ENCODE measurements at regions of chr10 and their contacts with region 1.

Region 1: DNA sequence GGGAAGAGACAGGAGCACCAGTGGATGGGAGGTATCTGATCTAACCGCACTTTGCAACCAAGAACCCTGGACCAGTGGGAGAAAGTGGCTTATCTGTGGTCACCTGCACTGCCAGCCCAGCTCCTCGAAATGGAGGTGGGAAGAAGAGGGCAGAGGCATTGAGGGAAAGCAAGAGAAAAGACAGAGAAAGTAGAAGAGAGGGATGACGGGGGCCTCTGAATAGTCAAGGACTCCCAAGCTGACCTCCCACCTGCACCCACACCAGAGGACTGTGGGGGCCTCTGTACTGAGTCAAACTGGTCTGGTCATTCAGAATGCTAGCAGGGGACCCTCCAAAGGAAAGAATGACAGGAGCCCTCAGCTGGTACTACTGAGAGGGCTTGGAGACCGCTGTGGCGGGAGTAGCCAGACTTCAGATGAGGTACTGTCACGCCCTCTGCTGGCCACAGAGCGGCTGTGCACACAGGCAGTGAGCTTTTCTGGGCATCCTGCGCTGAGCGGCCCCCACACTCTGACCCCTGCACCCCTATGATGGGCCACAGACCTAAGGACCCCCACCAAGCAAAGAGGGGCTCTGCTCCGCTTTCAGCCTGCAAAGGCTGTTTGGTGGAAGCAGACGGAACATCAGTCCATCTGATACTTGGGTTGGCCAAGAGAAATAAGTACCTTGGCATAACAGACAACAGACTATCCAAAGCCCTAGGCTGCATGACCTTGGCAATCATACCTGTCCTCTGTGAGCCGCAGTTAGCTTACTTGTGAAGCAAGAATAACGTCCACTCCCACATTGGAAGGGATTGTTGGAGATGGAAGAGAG is 112.9 kb downstream of the COL13A1 start:
- DNase-seq: peak; percentile 79
- H3K4me3 Mint-ChIP-seq: no peak overlapping the region
- H3K27ac Mint-ChIP-seq: no peak overlapping the region
- H3K4me1 Mint-ChIP-seq: no peaks in the 10 kb centered on the region
- H3K27me3 Mint-ChIP-seq: peaks cover 5% of the 10 kb centered on the region

Region 2: DNA sequence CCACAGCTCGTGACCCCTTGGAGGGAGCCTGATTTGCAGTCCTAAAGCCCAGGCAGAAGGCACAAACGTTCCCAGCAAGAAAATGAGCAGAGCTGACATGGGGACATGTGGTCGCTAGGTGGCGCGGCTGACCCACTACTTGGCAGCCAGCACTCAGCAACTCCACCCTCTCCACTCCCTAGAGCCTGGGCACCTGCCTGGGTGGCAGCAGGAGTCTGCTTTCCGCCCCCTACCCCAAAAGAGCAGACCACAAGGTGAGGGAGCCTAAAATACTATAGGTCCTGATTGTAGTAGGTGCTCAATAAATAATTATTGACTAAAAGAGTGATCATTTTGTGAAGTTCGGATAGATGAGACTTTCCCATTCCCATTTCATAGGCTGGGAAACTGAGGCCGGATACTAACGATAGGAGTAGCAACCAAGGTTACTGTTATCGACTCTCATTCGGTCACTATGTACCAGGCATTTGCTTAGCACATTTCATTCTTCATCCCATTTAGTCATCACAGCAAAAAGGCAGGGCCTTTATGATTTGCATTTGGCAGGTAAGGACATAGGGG is 398.8 kb before region 1 on chr10:
- CTCF ChIA-PET with region 1: interaction called, 9 read pairs
- intact Hi-C with region 1: loop called (anchors 5 kb)
- DNase-seq: peak; percentile 87
- H3K4me3 Mint-ChIP-seq: no peak overlapping the region
- H3K27ac Mint-ChIP-seq: no peak overlapping the region
- H3K4me1 Mint-ChIP-seq: no peaks in the 10 kb centered on the region
- H3K27me3 Mint-ChIP-seq: no peaks in the 10 kb centered on the region

Region 3: DNA sequence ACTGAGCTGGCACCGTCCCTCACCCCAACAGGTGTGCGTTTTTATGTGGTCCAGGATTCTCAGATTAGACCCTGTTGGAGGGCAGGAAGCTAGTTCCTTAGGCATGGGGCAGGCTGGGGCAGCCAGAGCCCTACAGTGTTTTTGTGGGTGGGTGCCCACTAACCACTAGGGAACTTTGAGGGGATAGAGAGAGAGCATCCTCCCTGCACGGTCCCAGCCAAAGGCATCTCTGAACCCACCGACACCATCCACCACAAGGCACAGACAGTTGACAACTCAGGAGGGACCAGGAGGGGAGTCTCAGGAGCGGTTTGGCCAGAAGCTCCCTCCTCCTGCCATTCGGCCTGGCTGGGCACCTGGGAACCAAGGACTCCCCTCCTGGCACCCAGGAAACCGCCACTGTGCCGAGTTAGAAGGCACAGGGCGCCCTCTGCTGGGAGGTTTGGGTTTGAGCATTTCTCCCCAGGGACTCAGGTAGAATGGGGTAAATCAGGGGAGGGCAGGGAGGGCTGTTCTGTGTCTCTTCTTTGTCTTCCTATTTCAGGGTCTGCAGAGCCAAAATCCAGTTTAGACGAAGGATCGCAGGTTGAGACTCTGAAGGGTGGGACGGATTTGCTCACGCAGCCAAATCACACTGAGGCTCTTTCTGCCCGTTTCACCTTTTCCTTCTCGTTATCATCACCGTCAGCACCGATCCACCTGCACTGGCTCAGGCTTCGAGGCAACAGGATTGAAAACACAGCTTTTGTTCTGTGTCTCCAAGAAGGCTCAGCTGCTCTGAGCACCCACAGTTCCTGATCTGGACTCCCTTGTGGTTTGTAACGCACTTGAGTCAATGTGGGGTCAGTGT is 197.7 kb before region 1 on chr10:
- CTCF ChIA-PET with region 1: interaction called, 10 read pairs
- intact Hi-C with region 1: no loop called
- DNase-seq: peak; percentile 78
- H3K4me3 Mint-ChIP-seq: no peak overlapping the region
- H3K27ac Mint-ChIP-seq: no peak overlapping the region
- H3K4me1 Mint-ChIP-seq: no peaks in the 10 kb centered on the region
- H3K27me3 Mint-ChIP-seq: no peaks in the 10 kb centered on the region

Region 4: DNA sequence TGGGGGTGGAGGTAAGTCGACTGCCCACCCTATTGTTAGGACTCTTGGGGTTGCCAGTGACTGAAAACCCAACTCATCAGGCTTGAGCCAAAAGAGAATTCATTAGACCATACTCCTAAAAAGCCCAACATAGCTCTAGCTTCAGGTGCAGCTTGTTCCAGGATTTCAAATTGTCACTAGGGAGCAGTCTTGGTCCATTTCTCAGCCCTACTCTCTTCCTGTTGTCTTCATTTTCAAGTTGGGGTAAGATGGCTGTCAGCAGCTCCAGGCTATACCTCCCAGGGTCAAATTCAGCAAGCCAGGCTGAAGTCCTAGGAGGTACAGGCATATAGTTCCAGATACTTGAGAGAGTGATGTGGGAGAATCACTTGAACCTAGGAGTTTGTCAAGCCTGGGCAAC is 127.8 kb before region 1 on chr10:
- CTCF ChIA-PET with region 1: interaction called, 41 read pairs
- intact Hi-C with region 1: loop called (anchors 2 kb)
- DNase-seq: no peak
- H3K4me3 Mint-ChIP-seq: no peak overlapping the region
- H3K27ac Mint-ChIP-seq: no peak overlapping the region
- H3K4me1 Mint-ChIP-seq: no peaks in the 10 kb centered on the region
- H3K27me3 Mint-ChIP-seq: no peaks in the 10 kb centered on the region

Region 5: GRCh38 chr10:69861251-69862240 is 53.1 kb before region 1 on chr10:
- CTCF ChIA-PET with region 1: interaction called, 3 read pairs
- intact Hi-C with region 1: loop called (anchors 5 kb)
- DNase-seq: peak; percentile 11
- H3K4me3 Mint-ChIP-seq: no peak overlapping the region
- H3K27ac Mint-ChIP-seq: no peak overlapping the region
- H3K4me1 Mint-ChIP-seq: no peaks in the 10 kb centered on the region
- H3K27me3 Mint-ChIP-seq: no peaks in the 10 kb centered on the region

Region 6: DNA sequence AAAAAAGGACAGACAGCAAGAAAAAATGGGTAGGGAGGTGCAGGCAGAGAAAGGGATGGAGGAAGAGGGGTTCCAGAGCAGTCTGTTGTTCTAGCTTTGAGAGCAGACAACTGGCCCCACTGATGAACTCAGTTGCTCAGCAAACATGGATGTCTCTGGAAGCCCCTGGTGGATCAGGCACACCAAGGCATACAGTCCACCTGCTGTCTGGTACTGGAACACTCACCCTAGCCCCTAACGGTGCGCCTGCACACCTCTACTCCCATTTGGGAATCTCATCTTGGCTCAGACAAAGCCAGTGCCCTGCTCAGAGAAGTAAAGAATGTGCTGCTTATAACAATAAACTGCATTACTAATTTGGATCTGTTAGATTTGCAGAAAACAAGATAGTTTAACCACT is 145.8 kb after region 1 on chr10:
- CTCF ChIA-PET with region 1: no interaction called
- intact Hi-C with region 1: no loop called
- DNase-seq: no peak
- H3K4me3 Mint-ChIP-seq: no peak overlapping the region
- H3K27ac Mint-ChIP-seq: no peak overlapping the region
- H3K4me1 Mint-ChIP-seq: no peaks in the 10 kb centered on the region
- H3K27me3 Mint-ChIP-seq: peaks cover 3% of the 10 kb centered on the region

Region 7: GRCh38 chr10:70672165-70673042 is 757.8 kb after region 1 on chr10 and contains the start of gene ADAMTS14:
- CTCF ChIA-PET with region 1: no interaction called
- intact Hi-C with region 1: no loop called
- DNase-seq: no peak
- H3K4me3 Mint-ChIP-seq: peak within 1 kb of the TSS; percentile 14
- H3K27ac Mint-ChIP-seq: no peak within 1 kb of the TSS
- H3K4me1 Mint-ChIP-seq: peaks cover 5% of the 10 kb centered on the region
- H3K27me3 Mint-ChIP-seq: peaks cover 29% of the 10 kb centered on the region
- total RNA-seq, gene ADAMTS14: not detected

Measured in activated naive CD4-positive, alpha-beta T cell treated with anti-CD3 and anti-CD28 coated beads for 36 hours (primary cell).